ENCODE measurements at regions of chr14 and their contacts with region 1.

Region 1: DNA sequence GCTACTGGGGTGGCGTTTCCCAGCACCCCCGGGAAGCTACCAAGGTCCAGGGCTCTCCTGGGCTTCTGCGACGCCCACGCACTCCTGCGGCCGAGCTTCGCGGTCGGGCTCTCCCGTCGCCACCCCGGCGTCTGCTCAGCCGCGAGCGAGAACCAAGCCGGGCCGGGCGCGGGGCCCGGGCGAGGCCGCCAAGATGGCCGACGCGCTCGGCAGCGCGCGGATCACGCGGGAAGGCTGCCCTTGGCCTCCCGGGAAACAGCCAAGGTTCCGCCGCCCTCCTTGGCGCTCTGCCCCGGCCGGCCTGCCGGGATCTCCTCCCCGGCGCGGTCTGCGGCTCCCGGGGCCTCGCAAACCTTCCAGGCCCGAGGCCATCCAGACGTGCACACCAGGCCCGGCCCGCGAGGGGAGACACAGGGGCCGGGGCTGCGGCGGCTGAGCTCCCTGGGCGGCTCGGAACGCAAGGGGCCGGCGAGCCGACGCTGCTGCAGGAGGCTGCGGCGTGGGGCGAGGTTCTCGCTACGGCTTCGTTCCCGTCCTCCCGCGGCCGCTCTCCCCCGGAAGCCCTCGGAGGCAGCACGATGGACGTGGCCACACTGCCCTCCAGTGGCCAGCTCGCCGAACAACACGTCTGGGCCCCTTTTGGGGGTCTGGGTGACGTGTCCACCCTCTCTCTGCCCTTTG is 23.5 kb upstream of the ZFP36L1 start:
- DNase-seq: peak; percentile 93
- ATAC-seq: peak; percentile 87
- H3K4me3 Mint-ChIP-seq: peak overlapping the region; percentile 68
- H3K27ac Mint-ChIP-seq: peak overlapping the region; percentile 86
- H3K4me1 Mint-ChIP-seq: peaks cover 52% of the 10 kb centered on the region
- H3K27me3 Mint-ChIP-seq: no peaks in the 10 kb centered on the region

Region 2: DNA sequence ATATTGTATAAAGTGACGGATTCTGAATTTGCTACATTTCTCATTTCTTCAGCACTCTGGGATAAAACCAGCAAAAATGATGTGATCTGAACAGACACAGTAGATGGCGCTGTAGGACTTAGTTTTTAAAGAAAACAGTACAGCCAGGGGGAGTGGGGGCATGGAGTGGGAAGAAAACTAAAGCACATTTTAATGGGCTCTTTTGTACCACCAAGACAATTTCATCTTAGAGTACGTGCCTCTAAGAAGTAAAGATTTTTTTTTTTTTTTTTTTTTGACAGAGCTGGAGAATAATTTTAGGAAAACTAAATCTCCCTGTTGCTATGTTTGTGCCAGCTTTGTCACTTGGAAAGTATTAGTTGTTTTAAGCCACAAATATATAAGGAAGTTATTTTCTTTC is 872.5 kb before region 1 on chr14:
- CTCF ChIA-PET with region 1: interaction called, 11 read pairs
- DNase-seq: peak; percentile 57
- ATAC-seq: peak; percentile 45
- H3K4me3 Mint-ChIP-seq: no peak overlapping the region
- H3K27ac Mint-ChIP-seq: no peak overlapping the region
- H3K4me1 Mint-ChIP-seq: no peaks in the 10 kb centered on the region
- H3K27me3 Mint-ChIP-seq: no peaks in the 10 kb centered on the region

Region 3: DNA sequence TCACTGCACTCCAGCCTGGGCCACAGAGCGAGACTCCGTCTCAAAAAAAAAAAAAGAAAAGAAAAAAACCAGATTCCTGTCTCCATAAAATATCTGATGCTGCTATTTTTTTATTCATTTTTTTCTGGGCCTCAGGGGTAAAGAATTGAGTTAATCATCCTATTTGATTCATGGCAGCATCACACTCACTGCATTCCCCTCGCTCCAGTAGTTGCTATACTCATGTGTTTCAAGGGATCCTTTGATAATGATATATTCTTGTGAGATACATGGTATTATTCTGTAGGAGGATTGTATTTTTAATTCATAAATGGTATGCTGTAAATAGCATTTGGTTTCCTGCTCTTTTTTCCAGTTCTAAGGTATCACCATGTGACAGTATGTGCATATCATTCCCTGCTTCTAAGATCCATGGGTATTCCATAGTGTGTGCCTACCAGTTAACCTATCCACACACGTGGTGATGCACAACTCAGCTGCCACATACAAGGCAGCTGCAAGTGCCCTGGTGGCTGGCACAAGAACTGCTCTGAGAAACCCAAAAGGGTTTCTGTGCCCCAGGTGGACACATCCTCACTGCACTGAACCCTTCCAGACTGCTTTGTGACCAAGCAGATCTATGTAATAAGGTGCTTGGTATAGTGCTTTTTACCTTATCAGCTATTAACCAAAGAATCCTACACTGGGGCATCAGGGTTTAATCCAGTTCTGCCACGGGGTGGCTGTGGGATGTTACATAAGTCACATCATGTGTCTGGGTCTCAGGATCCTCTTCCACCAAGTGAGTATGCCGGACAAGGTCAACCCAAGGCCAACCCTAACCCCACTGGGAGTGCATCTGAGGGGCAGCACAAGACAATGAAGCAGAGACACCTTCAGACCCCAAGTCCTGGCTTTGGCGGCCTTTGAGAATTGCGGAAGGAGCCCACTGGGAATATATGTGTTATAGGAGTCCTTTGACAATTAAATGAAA is 98.1 kb before region 1 on chr14:
- CTCF ChIA-PET with region 1: interaction called, 14 read pairs
- DNase-seq: no peak
- ATAC-seq: no peak
- H3K4me3 Mint-ChIP-seq: no peak overlapping the region
- H3K27ac Mint-ChIP-seq: no peak overlapping the region
- H3K4me1 Mint-ChIP-seq: peaks cover 20% of the 10 kb centered on the region
- H3K27me3 Mint-ChIP-seq: peaks cover 6% of the 10 kb centered on the region

Region 4: DNA sequence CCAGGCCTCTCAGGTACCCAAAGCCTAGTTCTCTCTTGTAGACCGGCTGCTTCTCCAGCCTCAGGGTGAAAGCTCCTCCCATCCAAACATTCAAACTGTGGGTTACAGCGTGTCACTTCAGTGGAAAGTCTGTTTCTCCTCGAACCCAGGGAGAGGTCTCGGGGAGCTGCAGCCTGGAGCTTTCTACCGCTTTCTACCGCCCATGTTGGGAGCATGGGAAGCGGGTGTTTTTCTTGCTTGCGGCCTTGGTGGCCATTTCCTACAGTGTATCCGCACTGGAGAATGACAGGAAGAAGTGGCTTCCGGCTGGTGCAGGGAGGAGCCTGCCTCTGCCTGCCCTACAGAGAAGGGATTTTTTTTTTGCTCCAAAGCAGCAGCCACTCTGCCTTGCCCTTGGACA is 44.8 kb before region 1 on chr14:
- CTCF ChIA-PET with region 1: no interaction called
- DNase-seq: no peak
- ATAC-seq: peak; percentile 60
- H3K4me3 Mint-ChIP-seq: no peak overlapping the region
- H3K27ac Mint-ChIP-seq: no peak overlapping the region
- H3K4me1 Mint-ChIP-seq: peaks cover 16% of the 10 kb centered on the region
- H3K27me3 Mint-ChIP-seq: no peaks in the 10 kb centered on the region

Region 5: GRCh38 chr14:68795597-68796417 is 20.6 kb before region 1 on chr14:
- CTCF ChIA-PET with region 1: interaction called, 237 read pairs
- DNase-seq: peak; percentile 85
- ATAC-seq: peak; percentile 52
- H3K4me3 Mint-ChIP-seq: peak overlapping the region; percentile 87
- H3K27ac Mint-ChIP-seq: peak overlapping the region; percentile 100
- H3K4me1 Mint-ChIP-seq: peaks cover 33% of the 10 kb centered on the region
- H3K27me3 Mint-ChIP-seq: no peaks in the 10 kb centered on the region